MCF 10A (cell line): ENCODE measurements at regions of chr5 and their contacts with region 1.

Region 1: DNA sequence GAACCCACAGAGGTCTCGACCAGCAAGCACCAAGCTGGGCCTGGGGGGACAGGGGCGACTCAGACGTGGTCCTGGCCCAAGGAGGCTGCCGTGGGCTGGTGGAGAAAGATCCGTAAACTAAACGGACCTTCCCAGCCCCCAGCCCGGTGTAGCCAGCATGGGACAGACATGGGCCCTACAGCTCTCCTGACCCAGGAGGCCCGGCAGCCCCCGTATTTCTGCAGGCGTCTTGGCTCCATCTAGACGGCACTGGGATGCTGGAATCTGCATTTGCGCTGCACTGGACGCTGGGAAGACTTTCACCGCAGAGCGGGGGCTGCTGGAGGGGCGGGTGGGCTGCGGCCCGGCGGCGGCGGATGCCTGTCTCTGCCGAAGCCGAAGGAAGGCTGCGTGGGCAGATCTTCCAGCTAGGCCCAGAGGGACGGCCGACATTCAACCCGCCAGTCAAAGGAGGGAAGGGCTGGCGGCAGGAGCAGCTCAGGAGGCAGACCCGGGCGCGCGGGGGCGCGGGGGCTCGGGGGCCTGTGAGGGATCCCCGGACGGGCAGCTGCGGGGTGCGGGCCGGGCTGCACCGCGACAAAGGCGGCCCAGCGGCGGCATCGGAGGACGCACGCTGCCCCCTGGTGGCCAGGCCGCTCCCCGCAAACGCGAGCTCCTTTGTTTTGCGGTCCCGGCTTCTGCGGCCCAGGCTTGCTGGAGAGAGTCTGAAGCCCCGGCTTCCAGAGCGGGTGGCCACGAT is 266.2 kb downstream of the NSG2 start:
- DNase-seq: peak; percentile 62
- H3K4me3 Mint-ChIP-seq: peak overlapping the region; percentile 24
- H3K27ac Mint-ChIP-seq: no peak overlapping the region
- H3K4me1 Mint-ChIP-seq: no peaks in the 10 kb centered on the region
- H3K27me3 Mint-ChIP-seq: peaks cover 42% of the 10 kb centered on the region
- CTCF ChIP-seq: peak; percentile 99

Region 2: GRCh38 chr5:173625696-173626504 is 685.8 kb before region 1 on chr5:
- CTCF ChIA-PET with region 1: interaction called, 12 read pairs
- POLR2A ChIA-PET with region 1: no interaction called
- intact Hi-C with region 1: no loop called
- DNase-seq: no peak
- H3K4me3 Mint-ChIP-seq: no peak overlapping the region
- H3K27ac Mint-ChIP-seq: no peak overlapping the region
- H3K4me1 Mint-ChIP-seq: peaks cover 6% of the 10 kb centered on the region
- H3K27me3 Mint-ChIP-seq: no peaks in the 10 kb centered on the region
- CTCF ChIP-seq: peak; percentile 20

Region 3: GRCh38 chr5:174020397-174021296 is 291.1 kb before region 1 on chr5:
- CTCF ChIA-PET with region 1: interaction called, 8 read pairs
- POLR2A ChIA-PET with region 1: no interaction called
- intact Hi-C with region 1: loop called (anchors 1 kb)
- DNase-seq: peak; percentile 84
- H3K4me3 Mint-ChIP-seq: no peak overlapping the region
- H3K27ac Mint-ChIP-seq: no peak overlapping the region
- H3K4me1 Mint-ChIP-seq: peaks cover 8% of the 10 kb centered on the region
- H3K27me3 Mint-ChIP-seq: peaks cover 54% of the 10 kb centered on the region
- CTCF ChIP-seq: peak; percentile 73

Region 4: DNA sequence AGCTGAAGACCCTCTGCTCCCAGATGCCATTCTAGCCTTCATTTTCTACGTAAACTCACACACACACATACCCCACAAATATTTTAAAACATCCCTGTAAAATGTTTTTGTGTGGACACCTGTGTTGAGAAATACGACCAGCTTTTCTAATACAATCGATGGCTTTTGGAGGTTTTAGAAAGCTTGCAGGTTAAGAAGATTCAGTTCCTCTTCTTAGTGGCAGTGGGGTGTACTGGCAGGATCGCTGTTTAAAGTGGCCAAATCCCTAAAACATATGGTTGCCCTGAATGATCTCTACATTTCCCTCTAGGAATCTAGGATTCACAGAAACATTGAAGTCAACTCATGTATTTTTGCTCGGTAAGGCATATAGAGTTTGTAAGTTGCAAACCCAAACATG is 29.8 kb before region 1 on chr5:
- CTCF ChIA-PET with region 1: interaction called, 19 read pairs
- POLR2A ChIA-PET with region 1: no interaction called
- intact Hi-C with region 1: no loop called
- DNase-seq: no peak
- H3K4me3 Mint-ChIP-seq: no peak overlapping the region
- H3K27ac Mint-ChIP-seq: no peak overlapping the region
- H3K4me1 Mint-ChIP-seq: no peaks in the 10 kb centered on the region
- H3K27me3 Mint-ChIP-seq: peaks cover 64% of the 10 kb centered on the region
- CTCF ChIP-seq: no peak

Region 5: DNA sequence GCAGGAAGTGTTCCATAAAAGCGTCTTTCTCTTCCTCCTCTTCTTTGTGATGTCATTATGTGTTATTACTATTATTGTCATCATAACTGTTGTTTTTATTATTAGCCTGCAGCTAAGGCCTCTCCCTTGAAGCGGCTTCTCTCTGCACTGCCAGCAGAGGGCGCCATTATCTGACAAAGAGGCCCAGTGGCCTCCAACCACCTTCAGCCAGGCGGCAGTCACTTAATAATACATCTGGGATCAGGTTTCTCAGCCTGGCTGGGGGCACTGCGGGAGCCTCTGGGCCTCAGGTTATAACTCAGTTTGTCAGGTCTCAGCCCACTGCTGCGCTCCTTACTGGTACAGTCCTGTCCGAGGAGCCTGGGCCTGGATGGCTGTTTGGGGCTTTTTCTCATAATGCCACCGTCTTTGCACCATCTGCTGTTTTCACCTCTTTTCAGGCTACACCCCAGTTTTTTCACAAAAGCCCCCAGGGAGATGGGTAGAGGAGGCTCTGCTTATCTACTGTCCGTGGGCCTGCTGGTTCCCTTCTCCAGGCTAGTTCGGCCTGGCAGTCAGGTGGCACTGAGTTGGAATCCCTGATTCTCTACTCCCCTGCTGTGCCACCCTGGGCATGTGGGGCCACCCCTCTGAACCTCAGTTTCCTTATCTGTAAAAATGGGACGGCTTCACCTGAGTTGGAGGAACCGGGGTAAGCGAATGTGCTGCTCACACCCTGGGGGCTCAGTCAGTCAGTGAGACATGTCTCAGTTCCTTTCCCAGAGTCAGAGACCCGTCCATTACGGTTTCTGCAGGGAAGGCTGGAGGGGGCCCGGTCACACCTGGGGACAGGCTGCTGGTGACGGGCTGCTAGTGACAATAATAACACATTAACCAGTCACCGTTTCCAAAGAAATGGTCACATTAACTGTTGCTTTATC is 15.9 kb after region 1 on chr5:
- CTCF ChIA-PET with region 1: interaction called, 29 read pairs
- POLR2A ChIA-PET with region 1: interaction called, 4 read pairs
- intact Hi-C with region 1: no loop called
- DNase-seq: peak; percentile 88
- H3K4me3 Mint-ChIP-seq: no peak overlapping the region
- H3K27ac Mint-ChIP-seq: peak overlapping the region; percentile 96
- H3K4me1 Mint-ChIP-seq: peaks cover 25% of the 10 kb centered on the region
- H3K27me3 Mint-ChIP-seq: peaks cover 25% of the 10 kb centered on the region
- CTCF ChIP-seq: peak; percentile 98